ENCODE measurements at regions of chr16 and their contacts with region 1.

Region 1: GRCh38 chr16:30585400-30586189 is at the start of gene ZNF785:
- DNase-seq: peak; percentile 96
- ATAC-seq: peak; percentile 99
- H3K4me3 Mint-ChIP-seq: peak within 1 kb of the TSS; percentile 87
- H3K27ac Mint-ChIP-seq: peak within 1 kb of the TSS; percentile 92
- H3K4me1 Mint-ChIP-seq: peaks cover 37% of the 10 kb centered on the region
- H3K27me3 Mint-ChIP-seq: no peaks in the 10 kb centered on the region
- total RNA-seq, gene ZNF785: 9.2 to 10.8 TPM

Region 2: GRCh38 chr16:30395155-30395991 is 190.2 kb before region 1 on chr16 and contains the start of gene ZNF48:
- CTCF ChIA-PET with region 1: no interaction called
- POLR2A ChIA-PET with region 1: no interaction called
- intact Hi-C with region 1: no loop called
- DNase-seq: peak; percentile 67
- ATAC-seq: peak; percentile 61
- H3K4me3 Mint-ChIP-seq: peak within 1 kb of the TSS; percentile 81
- H3K27ac Mint-ChIP-seq: peak within 1 kb of the TSS; percentile 48
- H3K4me1 Mint-ChIP-seq: peaks cover 28% of the 10 kb centered on the region
- H3K27me3 Mint-ChIP-seq: no peaks in the 10 kb centered on the region
- total RNA-seq, gene ZNF48: 10.6 to 11.0 TPM

Region 3: DNA sequence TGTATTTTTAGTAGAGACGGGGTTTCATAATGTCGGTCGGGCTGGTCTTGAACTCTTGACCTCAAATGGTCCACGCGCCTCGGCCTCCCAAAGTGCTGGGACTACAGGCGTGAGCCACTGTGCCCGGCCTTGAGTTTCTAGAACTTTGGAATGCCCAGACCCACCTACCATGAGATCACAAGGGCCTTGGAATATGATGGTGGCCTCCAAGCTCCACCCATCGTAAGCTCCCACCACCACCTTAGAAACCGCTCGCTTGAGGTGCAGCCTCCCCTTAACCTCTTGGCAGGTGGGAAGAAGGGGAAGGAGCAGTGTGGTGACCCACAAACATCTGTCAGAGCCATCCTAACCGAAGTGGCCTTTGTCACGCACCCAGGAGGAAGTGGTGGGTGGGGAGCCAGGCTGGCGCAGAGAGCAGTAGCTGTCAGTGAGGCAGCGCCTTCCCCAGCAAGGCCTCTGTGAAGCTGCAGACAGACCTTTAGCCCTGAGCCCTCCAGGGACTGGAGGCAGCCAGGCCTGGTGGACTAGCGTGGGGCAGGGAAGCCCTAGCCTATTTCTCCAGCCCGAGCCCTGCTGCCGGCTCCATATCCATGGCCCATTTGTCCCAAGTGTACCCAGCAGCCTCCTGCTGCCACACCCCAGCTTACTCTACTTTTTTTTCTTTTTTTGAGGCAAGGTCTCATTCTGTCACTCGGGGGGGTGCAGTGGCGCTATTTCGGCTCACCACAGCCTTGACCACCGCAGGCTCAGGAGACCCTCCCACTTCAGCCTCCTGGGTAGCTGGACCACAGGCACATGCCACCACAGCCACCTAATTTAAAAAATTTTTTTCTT is 126.8 kb before region 1 on chr16:
- CTCF ChIA-PET with region 1: no interaction called
- POLR2A ChIA-PET with region 1: no interaction called
- intact Hi-C with region 1: no loop called
- DNase-seq: peak; percentile 94
- ATAC-seq: peak; percentile 96
- H3K4me3 Mint-ChIP-seq: peak overlapping the region; percentile 57
- H3K27ac Mint-ChIP-seq: peak overlapping the region; percentile 95
- H3K4me1 Mint-ChIP-seq: peaks cover 59% of the 10 kb centered on the region
- H3K27me3 Mint-ChIP-seq: no peaks in the 10 kb centered on the region

Region 4: GRCh38 chr16:30571695-30572600 is 13.6 kb before region 1 on chr16 and contains the start of gene ZNF688:
- CTCF ChIA-PET with region 1: interaction called, 8 read pairs
- POLR2A ChIA-PET with region 1: interaction called, 10 read pairs
- intact Hi-C with region 1: loop called (anchors 1 kb)
- DNase-seq: peak; percentile 95
- ATAC-seq: peak; percentile 79
- H3K4me3 Mint-ChIP-seq: peak within 1 kb of the TSS; percentile 87
- H3K27ac Mint-ChIP-seq: peak within 1 kb of the TSS; percentile 93
- H3K4me1 Mint-ChIP-seq: peaks cover 57% of the 10 kb centered on the region
- H3K27me3 Mint-ChIP-seq: no peaks in the 10 kb centered on the region
- total RNA-seq, gene ZNF688: 7.1 to 9.1 TPM

Region 5: DNA sequence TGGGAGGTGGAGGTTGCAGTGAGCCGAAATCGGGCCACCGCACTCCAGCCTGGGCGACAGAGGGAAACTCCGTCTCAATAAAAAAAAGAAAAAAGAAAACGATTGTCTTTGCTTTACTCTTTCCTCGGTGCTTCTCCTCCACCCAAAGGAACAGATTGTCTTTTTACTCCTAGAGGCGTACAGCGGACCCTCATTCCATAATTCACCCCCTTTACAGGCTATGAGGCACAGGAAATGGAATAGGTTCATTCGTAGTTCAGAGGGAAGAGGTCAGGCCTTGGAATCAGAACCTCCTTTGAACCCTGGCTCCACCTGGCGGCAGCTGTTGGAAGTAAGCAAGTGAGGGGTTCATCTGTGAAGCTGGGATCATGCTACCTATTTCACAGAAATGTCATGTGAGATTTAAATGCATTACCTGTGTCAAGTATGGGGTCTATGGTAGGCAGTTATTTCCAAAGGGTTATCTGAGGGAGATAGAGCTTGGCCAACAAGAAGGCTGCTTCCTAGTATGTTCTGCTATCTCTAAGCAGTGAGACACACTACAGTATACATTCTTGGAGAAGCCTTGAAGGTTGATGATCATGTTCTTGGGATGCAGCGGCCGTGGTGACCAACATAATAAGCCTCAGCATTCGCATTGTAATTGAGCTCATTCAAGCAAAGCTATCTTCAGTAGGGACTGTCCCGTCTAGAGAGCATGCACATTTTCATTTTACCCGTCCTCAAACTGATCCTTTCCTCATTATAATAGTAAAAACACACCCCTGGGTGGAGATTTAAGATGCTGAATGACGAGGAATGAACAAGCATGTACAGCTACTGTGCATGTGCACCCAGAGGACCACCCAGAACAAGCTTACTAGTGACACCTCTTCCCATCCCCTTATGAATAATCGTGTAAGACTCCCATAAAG is 43.3 kb after region 1 on chr16:
- CTCF ChIA-PET with region 1: interaction called, 3 read pairs
- POLR2A ChIA-PET with region 1: no interaction called
- intact Hi-C with region 1: loop called in 1 of 2 experiments (anchors 2 kb)
- DNase-seq: peak; percentile 95
- ATAC-seq: peak; percentile 93
- H3K4me3 Mint-ChIP-seq: peak overlapping the region; percentile 58
- H3K27ac Mint-ChIP-seq: peak overlapping the region; percentile 82
- H3K4me1 Mint-ChIP-seq: peaks cover 14% of the 10 kb centered on the region
- H3K27me3 Mint-ChIP-seq: no peaks in the 10 kb centered on the region

Measured in activated CD4-positive, alpha-beta T cell treated with anti-CD3 and anti-CD28 coated beads for 36 hours (primary cell).